HEK293 (cell line): ENCODE measurements at regions of chr1 and their contacts with region 1.

Region 1: GRCh38 chr1:178542560-178543356 is 29.8 kb downstream of the TEX35 start:
- H3K4me3 ChIP-seq: peak overlapping the region; percentile 79
- H3K27ac ChIP-seq: peak overlapping the region; percentile 89
- H3K4me1 ChIP-seq: no peaks in the 10 kb centered on the region
- CTCF ChIP-seq: peak; percentile 88

Region 2: GRCh38 chr1:178501705-178502329 is 40.9 kb before region 1 on chr1:
- CTCF ChIA-PET with region 1: no interaction called
- POLR2A ChIA-PET with region 1: no interaction called
- H3K4me3 ChIP-seq: no peak overlapping the region
- H3K27ac ChIP-seq: no peak overlapping the region
- H3K4me1 ChIP-seq: no peaks in the 10 kb centered on the region
- CTCF ChIP-seq: peak; percentile 56; the same call in 1 of the 2 replicates

Region 3: DNA sequence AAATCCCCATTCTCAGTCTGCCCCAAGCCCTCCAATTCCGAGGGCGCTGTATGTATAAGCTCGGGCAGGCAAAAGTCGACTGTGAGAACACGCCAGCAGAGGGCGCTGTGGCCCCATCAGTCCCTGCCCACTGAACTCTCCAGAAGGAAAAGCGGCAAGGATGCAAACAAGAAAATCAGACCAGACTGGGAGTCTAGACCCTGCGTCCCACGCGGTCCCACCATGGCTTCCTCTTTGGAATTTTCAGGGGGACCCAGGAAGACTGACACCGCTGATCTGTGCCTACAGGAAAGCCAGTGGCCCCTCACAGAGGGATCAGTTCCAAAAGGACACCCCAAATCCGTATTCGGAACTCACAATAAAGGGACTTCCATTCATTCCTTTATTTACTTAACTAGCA is 10.4 kb before region 1 on chr1:
- CTCF ChIA-PET with region 1: interaction called, 39 read pairs
- POLR2A ChIA-PET with region 1: no interaction called
- H3K4me3 ChIP-seq: no peak overlapping the region
- H3K27ac ChIP-seq: no peak overlapping the region
- H3K4me1 ChIP-seq: no peaks in the 10 kb centered on the region; the same call in 1 of the 2 replicates
- CTCF ChIP-seq: peak; percentile 77

Region 4: DNA sequence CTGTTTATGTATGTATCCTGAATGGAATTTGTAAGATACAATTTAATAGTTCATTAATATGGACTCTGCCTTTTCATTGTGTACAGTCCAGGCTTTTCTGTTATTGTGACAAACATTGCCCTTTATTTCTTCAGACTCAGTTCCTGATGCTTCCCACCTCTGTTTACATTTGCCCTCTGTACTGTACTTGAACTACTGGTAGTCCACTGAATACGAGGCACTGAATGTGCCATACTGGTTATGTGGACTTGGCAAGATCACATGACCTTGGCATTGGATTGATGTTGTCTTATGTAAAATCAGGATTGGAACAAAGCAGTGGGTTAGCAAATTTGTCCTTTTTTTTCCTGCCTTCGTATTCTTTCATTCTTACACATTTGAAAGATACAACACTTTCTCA is 210.1 kb after region 1 on chr1:
- CTCF ChIA-PET with region 1: interaction called, 17 read pairs
- POLR2A ChIA-PET with region 1: no interaction called
- H3K4me3 ChIP-seq: no peak overlapping the region
- H3K27ac ChIP-seq: no peak overlapping the region
- H3K4me1 ChIP-seq: no peaks in the 10 kb centered on the region
- CTCF ChIP-seq: no peak

Region 5: GRCh38 chr1:178774263-178774662 is 231.5 kb after region 1 on chr1:
- CTCF ChIA-PET with region 1: interaction called, 13 read pairs
- POLR2A ChIA-PET with region 1: no interaction called
- H3K4me3 ChIP-seq: no peak overlapping the region
- H3K27ac ChIP-seq: no peak overlapping the region
- H3K4me1 ChIP-seq: no peaks in the 10 kb centered on the region
- CTCF ChIP-seq: 0 out of 2 replicates have a peak, but pooled peaks have one; percentile 8